Activated naive CD4-positive, alpha-beta T cell treated with anti-CD3 and anti-CD28 coated beads for 36 hours (primary cell): ENCODE measurements at regions of chr18 and their contacts with region 1.

Region 1: DNA sequence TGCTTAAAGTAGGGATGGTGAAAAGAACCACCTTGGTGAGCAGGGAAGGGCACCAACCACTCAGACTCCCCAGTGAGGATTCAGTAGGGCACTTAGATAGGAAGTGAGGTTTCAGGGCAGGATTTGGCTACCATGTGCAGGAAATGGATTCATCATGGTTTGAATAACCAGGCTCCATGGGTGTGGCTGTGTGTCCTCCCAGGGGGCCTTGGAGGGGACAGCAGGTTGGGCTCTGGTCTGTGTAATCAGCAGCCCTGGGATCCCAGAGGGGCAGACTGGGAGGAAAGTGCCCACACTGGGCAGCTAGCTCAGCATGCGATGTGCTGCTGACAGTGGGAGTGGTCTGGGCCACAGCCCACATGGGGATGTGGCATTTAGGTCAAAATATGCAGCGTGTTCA is 224.6 kb downstream of the CELF4 start:
- DNase-seq: no peak
- H3K4me3 Mint-ChIP-seq: no peak overlapping the region
- H3K27ac Mint-ChIP-seq: no peak overlapping the region
- H3K4me1 Mint-ChIP-seq: no peaks in the 10 kb centered on the region
- H3K27me3 Mint-ChIP-seq: peaks cover 9% of the 10 kb centered on the region

Region 2: DNA sequence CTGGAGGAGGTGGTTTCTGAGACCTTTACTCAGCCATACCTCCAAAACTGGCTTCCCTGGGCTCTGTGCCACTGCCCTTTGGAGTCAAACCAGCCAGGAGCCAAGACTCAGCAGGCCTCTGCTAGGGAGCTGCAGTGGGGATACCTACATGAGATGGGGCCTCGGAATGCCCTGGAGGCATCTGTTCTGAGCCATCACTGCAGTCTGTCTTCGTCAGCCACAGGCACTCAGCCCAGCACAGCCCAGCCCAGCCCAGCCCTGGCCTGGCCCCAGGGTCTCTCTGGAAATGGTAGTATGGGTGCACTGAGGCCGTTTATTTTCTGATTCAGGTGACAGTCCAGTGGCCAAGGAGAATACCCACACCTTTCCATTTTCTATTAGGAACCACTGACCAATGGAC is 14.8 kb after region 1 on chr18:
- CTCF ChIA-PET with region 1: interaction called, 10 read pairs
- intact Hi-C with region 1: no loop called
- DNase-seq: no peak
- H3K4me3 Mint-ChIP-seq: no peak overlapping the region
- H3K27ac Mint-ChIP-seq: no peak overlapping the region
- H3K4me1 Mint-ChIP-seq: no peaks in the 10 kb centered on the region
- H3K27me3 Mint-ChIP-seq: no peaks in the 10 kb centered on the region